SK-N-SH (cell line): ENCODE measurements at regions of chr5 and their contacts with region 1.

Region 1: GRCh38 chr5:131589510-131590348 is 45.3 kb downstream of the RAPGEF6 start:
- DNase-seq: peak; percentile 83
- H3K4me3 ChIP-seq: no peak overlapping the region
- H3K27ac ChIP-seq: 0 out of 4 replicates have a peak overlapping the region, but pooled peaks of 1 of the 2 experiments have one; percentile 7
- H3K4me1 ChIP-seq: peaks cover 0 to 3% of the 10 kb centered on the region in 2 experiments; a peak in 1 of 4 replicates
- H3K27me3 ChIP-seq: no peaks in the 10 kb centered on the region
- CTCF ChIP-seq: peak; percentile 90
- EP300 ChIP-seq: no peak
- RAD21 ChIP-seq: peak; percentile 95

Region 2: DNA sequence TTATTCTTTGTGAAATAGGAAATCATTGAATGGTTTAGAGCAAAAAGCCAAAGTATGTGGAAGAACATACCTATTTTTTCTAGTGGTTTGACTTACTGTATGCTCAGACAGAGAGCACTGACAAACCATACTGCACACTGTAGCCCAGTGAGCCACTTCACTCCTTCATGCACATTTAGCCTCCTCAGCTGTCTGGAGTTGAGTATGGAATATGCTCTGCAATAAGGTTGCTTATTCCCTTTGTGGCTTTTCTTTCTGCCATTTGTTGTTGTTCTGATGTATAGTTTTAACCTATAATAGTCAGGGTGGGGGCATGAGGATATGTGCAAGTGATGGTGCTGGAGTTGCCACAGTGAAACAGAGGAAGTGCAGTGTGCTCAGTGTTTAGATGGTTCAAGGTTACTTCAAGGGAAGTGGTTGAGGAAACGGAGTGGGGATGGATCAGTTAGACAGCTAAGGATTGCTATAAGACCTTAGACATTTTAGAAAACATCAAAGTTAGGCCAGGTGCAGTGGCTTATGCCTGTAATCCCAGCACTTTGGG is 225.2 kb before region 1 on chr5:
- CTCF ChIA-PET with region 1: no interaction called
- POLR2A ChIA-PET with region 1: no interaction called
- DNase-seq: no peak
- H3K4me3 ChIP-seq: no peak overlapping the region
- H3K27ac ChIP-seq: no peak overlapping the region
- H3K4me1 ChIP-seq: no peaks in the 10 kb centered on the region
- H3K27me3 ChIP-seq: no peaks in the 10 kb centered on the region
- CTCF ChIP-seq: no peak
- EP300 ChIP-seq: no peak
- RAD21 ChIP-seq: no peak

Region 3: DNA sequence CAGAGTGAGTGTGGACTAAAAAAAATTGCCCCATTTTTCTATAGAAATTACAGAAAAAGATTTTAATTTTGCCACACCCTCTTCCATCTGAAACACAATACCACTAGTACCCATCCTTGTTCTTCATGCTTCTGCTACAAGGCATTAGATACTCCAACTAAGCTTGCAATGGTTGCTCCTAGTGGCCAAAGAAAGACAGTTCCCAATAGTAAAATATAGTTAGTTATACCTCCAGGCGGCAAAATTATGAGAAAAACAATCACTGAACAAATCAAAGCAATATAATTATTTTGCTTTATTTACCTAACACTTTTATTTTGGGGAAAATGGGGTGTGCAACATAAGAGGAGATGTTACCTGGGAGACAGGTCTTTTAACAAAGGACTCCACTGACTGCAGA is 55.9 kb before region 1 on chr5:
- CTCF ChIA-PET with region 1: interaction called, 11 read pairs
- POLR2A ChIA-PET with region 1: no interaction called
- DNase-seq: no peak
- H3K4me3 ChIP-seq: no peak overlapping the region
- H3K27ac ChIP-seq: peak overlapping the region in 1 of 2 experiments; percentile 12; a peak in 1 of 4 replicates
- H3K4me1 ChIP-seq: peaks cover 17 to 36% of the 10 kb centered on the region in 2 experiments
- H3K27me3 ChIP-seq: no peaks in the 10 kb centered on the region
- CTCF ChIP-seq: peak; percentile 54
- EP300 ChIP-seq: no peak
- RAD21 ChIP-seq: no peak

Region 4: DNA sequence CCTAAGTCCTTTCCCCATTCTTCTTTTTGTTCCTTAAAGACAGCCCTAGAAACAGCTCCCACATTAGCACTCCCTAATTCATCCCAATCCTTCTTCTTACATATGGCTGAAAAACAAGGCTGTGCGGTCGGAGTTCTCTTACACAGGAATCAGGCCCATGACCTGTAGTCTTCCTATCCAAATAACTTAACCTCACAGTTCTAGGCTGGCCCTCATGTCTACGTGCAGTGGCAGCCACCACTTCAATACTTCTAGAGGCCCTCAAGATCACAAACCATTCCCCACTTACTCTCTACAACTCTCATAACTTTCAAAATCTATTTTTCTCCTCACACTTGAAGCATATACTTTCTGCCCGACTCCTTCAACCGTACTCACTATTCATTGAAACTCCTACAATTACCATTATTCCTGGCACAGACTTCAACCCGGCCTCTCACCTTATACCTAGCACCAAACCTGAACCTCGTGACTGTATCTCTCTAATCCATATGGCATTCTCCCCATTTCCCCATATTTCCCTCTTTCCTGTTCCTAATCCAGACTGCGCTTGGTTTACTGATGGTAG is 14.0 kb before region 1 on chr5:
- CTCF ChIA-PET with region 1: interaction called, 22 read pairs
- POLR2A ChIA-PET with region 1: no interaction called
- DNase-seq: no peak
- H3K4me3 ChIP-seq: no peak overlapping the region
- H3K27ac ChIP-seq: no peak overlapping the region
- H3K4me1 ChIP-seq: no peaks in the 10 kb centered on the region
- H3K27me3 ChIP-seq: no peaks in the 10 kb centered on the region
- CTCF ChIP-seq: no peak
- EP300 ChIP-seq: no peak
- RAD21 ChIP-seq: no peak

Region 5: GRCh38 chr5:131613423-131613822 is 23.7 kb after region 1 on chr5:
- CTCF ChIA-PET with region 1: interaction called, 14 read pairs
- POLR2A ChIA-PET with region 1: no interaction called
- DNase-seq: no peak
- H3K4me3 ChIP-seq: no peak overlapping the region
- H3K27ac ChIP-seq: no peak overlapping the region
- H3K4me1 ChIP-seq: peaks cover 0 to 10% of the 10 kb centered on the region in 2 experiments; a peak in 1 of 4 replicates
- H3K27me3 ChIP-seq: no peaks in the 10 kb centered on the region
- CTCF ChIP-seq: no peak
- EP300 ChIP-seq: no peak
- RAD21 ChIP-seq: no peak

Region 6: DNA sequence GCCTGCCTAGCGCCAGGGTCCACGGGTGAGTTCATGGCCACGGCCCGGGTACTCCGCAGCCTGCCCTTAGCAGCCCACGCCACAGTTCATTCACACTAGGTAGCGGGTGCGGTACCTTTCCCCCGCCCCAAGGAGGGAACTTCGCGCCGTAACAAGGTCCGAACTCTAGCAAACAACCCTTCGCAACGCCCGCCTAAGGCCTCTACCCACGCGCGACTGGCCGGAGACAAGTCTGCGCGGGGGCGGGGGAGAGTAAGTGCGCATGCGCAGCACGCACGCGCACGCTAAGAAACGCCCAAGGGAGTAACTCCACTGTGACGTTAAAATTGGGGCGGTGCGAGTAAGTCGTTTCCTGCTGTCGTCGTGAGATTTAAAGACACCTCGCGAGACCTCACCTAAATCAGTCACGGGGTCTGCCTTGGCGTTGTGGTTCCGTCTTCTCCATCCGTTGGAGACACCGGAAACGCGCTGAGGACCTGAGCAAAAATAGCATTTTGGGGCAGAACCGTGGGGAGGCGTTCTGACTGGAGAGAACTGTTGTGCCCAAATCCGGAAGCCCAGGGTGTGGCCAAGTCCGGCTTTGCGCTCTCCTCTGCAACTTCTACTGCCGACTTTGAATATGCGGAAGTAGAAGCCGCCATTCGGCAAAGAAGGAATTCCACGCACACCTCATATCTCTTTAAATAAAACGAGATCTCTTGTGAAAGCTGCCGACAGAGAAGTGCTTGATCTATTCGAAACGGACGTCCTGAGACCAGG is 45.4 kb after region 1 on chr5 and contains the start of gene RAPGEF6:
- CTCF ChIA-PET with region 1: interaction called, 17 read pairs
- POLR2A ChIA-PET with region 1: no interaction called
- DNase-seq: peak; percentile 85
- H3K4me3 ChIP-seq: peak within 1 kb of the TSS; percentile 84 to 98
- H3K27ac ChIP-seq: peak within 1 kb of the TSS; percentile 99
- H3K4me1 ChIP-seq: peaks cover 3 to 12% of the 10 kb centered on the region in 2 experiments; a peak in 3 of 4 replicates
- H3K27me3 ChIP-seq: no peaks in the 10 kb centered on the region
- CTCF ChIP-seq: 0 out of 2 replicates have a peak, but pooled peaks have one; percentile 13
- EP300 ChIP-seq: no peak
- RAD21 ChIP-seq: 0 out of 2 replicates have a peak, but pooled peaks have one; percentile 13
- polyA plus RNA-seq, gene RAPGEF6: 2.9 and 4.7 TPM in 2 replicates

Region 7: DNA sequence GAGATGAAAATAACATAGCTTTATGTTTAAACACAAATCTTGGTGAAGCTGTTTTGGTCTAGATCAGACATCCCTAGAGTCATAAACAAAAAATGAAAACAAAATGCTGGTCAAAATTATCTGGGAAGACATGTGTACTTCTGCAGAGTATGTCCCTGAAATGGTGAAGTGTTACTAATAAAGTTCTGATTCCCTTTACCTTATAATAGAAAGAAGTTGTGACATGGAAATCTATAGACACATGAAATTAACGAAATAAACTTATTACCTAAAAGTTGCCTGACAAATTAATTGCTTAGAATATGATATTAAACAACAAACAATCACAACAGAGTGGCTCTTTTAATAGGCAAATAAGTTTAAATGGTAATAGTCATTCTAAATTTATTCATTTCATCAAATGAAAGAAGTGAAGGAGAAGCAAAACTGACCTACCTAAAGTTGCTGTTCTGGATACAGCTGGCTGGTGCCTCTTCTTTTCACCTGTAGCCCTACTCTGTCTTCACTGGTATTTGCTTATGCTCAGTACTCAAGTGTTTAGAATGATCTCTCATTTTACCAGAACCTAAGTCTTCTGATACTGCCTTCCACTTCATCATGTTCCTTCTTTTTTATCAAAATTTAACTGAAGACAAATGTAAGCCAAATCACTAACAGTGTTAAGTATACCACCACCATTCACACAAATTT is 168.2 kb after region 1 on chr5:
- CTCF ChIA-PET with region 1: no interaction called
- POLR2A ChIA-PET with region 1: no interaction called
- DNase-seq: no peak
- H3K4me3 ChIP-seq: no peak overlapping the region
- H3K27ac ChIP-seq: no peak overlapping the region
- H3K4me1 ChIP-seq: peaks cover 0 to 8% of the 10 kb centered on the region in 2 experiments; a peak in 1 of 4 replicates
- H3K27me3 ChIP-seq: no peaks in the 10 kb centered on the region
- CTCF ChIP-seq: no peak
- EP300 ChIP-seq: no peak
- RAD21 ChIP-seq: no peak

Region 8: DNA sequence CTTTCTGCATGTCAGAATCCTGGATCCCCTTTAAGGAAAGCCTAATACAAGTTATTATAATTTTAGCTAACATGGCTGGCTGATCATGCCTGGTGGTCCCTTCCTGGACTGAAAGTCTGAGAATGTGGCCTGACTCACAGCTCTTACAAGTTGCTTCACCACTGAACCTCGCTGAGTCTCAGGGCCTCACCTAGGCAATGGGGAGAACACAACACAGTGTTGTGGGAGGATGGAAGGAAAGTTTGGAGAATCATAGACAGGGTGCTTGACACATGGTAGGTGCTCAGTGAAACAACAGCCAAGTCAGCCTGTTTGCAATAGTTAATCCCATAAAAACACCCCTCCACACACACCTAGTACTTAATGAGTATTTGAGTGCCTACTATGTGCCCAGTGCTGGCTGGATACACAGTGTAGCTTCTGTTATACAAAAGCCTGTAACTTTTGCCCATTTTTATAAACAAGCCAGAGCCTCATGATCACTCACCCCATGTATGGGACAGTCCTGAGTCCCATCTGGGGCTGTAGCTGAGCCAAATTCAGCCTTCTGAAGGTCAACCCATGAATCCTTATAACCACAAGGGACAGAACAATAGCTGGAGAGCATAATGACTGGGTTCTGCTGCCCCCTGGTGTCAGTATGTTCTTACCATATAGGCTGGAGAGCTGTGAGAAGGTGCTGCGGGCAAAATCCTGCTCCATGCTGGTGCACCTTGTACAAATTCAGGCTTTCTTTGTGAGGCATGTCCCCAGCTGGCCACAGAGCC is 417.9 kb after region 1 on chr5:
- CTCF ChIA-PET with region 1: interaction called, 152 read pairs
- POLR2A ChIA-PET with region 1: interaction called, 7 read pairs
- DNase-seq: peak; percentile 75
- H3K4me3 ChIP-seq: no peak overlapping the region; a peak in 1 of 4 replicates
- H3K27ac ChIP-seq: no peak overlapping the region
- H3K4me1 ChIP-seq: peaks cover 0 to 9% of the 10 kb centered on the region in 2 experiments; a peak in 1 of 4 replicates
- H3K27me3 ChIP-seq: no peaks in the 10 kb centered on the region
- CTCF ChIP-seq: peak; percentile 72
- EP300 ChIP-seq: no peak
- RAD21 ChIP-seq: peak; percentile 92